IMR-90 (cell line): ENCODE measurements at regions of chr2 and their contacts with region 1.

Region 1: GRCh38 chr2:66581339-66582103 is 146.6 kb downstream of the MEIS1 start:
- DNase-seq: peak; percentile 63
- ATAC-seq: peak; percentile 32
- H3K4me3 ChIP-seq: peak overlapping the region; percentile 43
- H3K27ac ChIP-seq: peak overlapping the region; percentile 90
- H3K4me1 ChIP-seq: peaks cover 21% of the 10 kb centered on the region
- H3K27me3 ChIP-seq: no peaks in the 10 kb centered on the region
- CTCF ChIP-seq: no peak
- POLR2A ChIP-seq: peak; percentile 34; the same call in 1 of the 2 replicates
- RAD21 ChIP-seq: no peak

Region 2: DNA sequence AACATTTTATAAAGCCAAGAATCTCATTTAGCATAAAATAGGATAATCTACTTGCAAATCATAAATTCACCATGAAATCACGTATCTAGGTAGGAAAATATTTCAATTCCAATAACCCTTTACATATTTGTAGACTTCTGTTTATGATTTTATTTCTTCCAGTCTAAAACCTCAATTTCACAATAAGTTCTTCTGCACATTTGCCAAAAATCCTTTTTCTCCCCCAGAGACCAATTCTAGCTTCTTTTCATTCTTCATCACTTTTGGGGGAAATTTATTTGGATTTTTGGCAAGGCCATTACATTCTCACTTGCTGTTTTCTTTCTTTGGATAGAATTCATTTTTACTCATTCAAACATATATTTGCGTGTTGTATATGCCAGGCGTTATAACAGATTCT is 1235.9 kb before region 1 on chr2:
- CTCF ChIA-PET with region 1: no interaction called
- POLR2A ChIA-PET with region 1: no interaction called
- dilution Hi-C with region 1: no loop called
- in situ Hi-C with region 1: no loop called
- intact Hi-C with region 1: no loop called
- DNase-seq: no peak
- ATAC-seq: no peak
- H3K4me3 ChIP-seq: no peak overlapping the region
- H3K27ac ChIP-seq: no peak overlapping the region
- H3K4me1 ChIP-seq: peaks cover 8% of the 10 kb centered on the region
- H3K27me3 ChIP-seq: no peaks in the 10 kb centered on the region
- CTCF ChIP-seq: no peak
- POLR2A ChIP-seq: no peak
- RAD21 ChIP-seq: no peak

Region 3: GRCh38 chr2:66790651-66791181 is 209.2 kb after region 1 on chr2:
- CTCF ChIA-PET with region 1: no interaction called
- POLR2A ChIA-PET with region 1: no interaction called
- dilution Hi-C with region 1: no loop called
- in situ Hi-C with region 1: no loop called
- intact Hi-C with region 1: loop called (anchors 5 kb)
- DNase-seq: peak; percentile 74
- ATAC-seq: peak; percentile 85
- H3K4me3 ChIP-seq: no peak overlapping the region
- H3K27ac ChIP-seq: no peak overlapping the region
- H3K4me1 ChIP-seq: peaks cover 9% of the 10 kb centered on the region
- H3K27me3 ChIP-seq: no peaks in the 10 kb centered on the region
- CTCF ChIP-seq: no peak
- POLR2A ChIP-seq: no peak
- RAD21 ChIP-seq: no peak

Region 4: DNA sequence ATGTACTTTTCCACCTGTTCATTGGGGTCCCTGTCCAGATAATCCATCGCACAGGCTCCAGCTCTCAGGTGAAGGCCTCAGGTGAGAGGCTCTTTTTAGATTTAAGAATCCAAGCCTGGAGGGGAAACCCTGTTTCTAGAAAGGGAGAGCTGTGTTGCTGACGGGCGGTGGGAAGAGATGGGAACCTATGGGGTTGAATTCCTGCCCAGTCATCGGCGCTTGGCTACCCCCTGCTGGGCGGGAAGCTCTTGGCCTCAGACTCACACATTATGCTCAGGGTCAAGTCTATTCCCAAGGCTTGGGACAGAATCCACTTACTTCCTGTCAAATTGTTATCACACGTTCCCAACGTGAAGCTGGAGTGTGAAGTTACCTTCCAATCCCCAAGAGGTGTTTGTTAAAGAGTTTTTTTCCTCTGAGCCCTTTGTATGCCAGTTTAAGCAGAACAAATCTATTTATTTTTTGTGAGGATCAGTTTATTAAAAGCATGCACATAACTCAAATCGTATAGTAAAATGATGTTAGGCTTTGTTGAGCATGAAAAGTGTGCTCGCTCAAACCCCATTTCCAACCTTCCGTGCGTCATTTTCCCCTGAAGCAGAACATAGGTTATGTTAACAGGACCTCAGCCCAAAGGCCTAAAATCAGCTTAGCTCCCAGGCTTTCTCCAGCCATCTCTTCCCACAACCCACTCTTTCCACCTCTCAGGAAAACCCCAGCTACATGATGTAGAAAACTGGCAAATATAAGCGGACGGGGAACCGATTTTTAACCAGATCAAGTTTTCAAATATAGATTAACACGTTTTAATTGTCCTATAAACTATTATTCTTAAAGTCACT is 633.9 kb after region 1 on chr2:
- CTCF ChIA-PET with region 1: interaction called, 5 read pairs
- POLR2A ChIA-PET with region 1: no interaction called
- dilution Hi-C with region 1: no loop called
- in situ Hi-C with region 1: loop called (anchors 5 kb)
- intact Hi-C with region 1: loop called (anchors 1 kb)
- DNase-seq: peak; percentile 92
- ATAC-seq: peak; percentile 95
- H3K4me3 ChIP-seq: no peak overlapping the region
- H3K27ac ChIP-seq: peak overlapping the region; percentile 86
- H3K4me1 ChIP-seq: peaks cover 16% of the 10 kb centered on the region
- H3K27me3 ChIP-seq: no peaks in the 10 kb centered on the region
- CTCF ChIP-seq: peak; percentile 88
- POLR2A ChIP-seq: no peak
- RAD21 ChIP-seq: peak; percentile 95

Region 5: GRCh38 chr2:67259581-67260342 is 678.2 kb after region 1 on chr2:
- CTCF ChIA-PET with region 1: no interaction called
- POLR2A ChIA-PET with region 1: no interaction called
- dilution Hi-C with region 1: no loop called
- in situ Hi-C with region 1: loop called (anchors 5 kb)
- intact Hi-C with region 1: no loop called
- DNase-seq: peak; percentile 94
- ATAC-seq: peak; percentile 19
- H3K4me3 ChIP-seq: no peak overlapping the region
- H3K27ac ChIP-seq: peak overlapping the region; percentile 63
- H3K4me1 ChIP-seq: peaks cover 20% of the 10 kb centered on the region
- H3K27me3 ChIP-seq: no peaks in the 10 kb centered on the region
- CTCF ChIP-seq: no peak
- POLR2A ChIP-seq: peak; percentile 91
- RAD21 ChIP-seq: no peak

Region 6: GRCh38 chr2:67397143-67397986 is 815.8 kb after region 1 on chr2 and contains the start of gene ETAA1:
- CTCF ChIA-PET with region 1: no interaction called
- POLR2A ChIA-PET with region 1: no interaction called
- dilution Hi-C with region 1: no loop called
- in situ Hi-C with region 1: no loop called
- intact Hi-C with region 1: loop called (anchors 2 kb)
- DNase-seq: peak; percentile 90
- ATAC-seq: peak; percentile 96
- H3K4me3 ChIP-seq: peak within 1 kb of the TSS; percentile 87
- H3K27ac ChIP-seq: peak within 1 kb of the TSS; percentile 96
- H3K4me1 ChIP-seq: peaks cover 9% of the 10 kb centered on the region
- H3K27me3 ChIP-seq: no peaks in the 10 kb centered on the region
- CTCF ChIP-seq: no peak
- POLR2A ChIP-seq: peak; percentile 83
- RAD21 ChIP-seq: peak; percentile 25
- total RNA-seq, gene ETAA1: 8.1 and 19.2 TPM in 2 replicates